CD8-positive, alpha-beta T cell (primary cell): ENCODE measurements at regions of chr3 and their contacts with region 1.

Region 1: DNA sequence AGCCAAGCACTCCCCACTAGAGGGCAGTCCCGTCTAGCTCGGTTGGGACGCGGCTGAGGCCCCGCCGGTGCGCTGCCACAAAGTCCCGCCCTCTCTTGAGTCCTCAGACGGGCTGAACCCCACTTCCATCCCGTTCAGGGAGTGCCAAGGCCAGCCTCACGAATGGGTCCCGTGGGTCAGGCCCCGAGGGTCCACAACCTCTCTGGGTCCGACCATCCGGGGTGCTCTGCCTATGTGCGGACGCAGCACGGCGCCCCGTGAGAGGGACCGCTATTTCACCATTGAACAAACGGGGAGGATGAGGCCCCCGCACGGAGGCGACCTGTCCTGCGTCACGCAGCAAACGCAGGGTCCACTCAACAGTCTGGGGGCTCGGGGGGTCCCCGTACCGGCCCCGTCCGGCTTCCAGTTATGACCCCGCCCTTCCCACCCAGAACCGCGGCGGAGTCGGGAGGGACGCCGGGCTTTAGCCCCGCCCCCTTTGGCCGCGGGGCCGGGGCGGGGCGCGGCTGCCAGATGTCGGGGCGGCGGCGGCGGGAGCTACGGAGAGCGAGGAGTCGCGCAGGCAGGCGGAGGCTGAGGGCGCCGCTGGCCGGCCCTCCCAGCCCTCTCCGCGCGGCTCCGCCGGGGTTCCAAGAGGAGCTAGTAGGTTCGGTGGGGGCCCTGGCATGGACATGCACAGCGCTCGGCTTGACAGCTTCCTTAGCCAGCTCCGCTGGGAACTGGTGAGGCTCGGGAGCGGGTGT is at the start of gene INKA1:
- DNase-seq: peak; percentile 77 to 94 (median 90)
- ATAC-seq: peak; percentile 83
- H3K4me3 ChIP-seq: peak within 1 kb of the TSS; percentile 98 to 99
- H3K4me3 Mint-ChIP-seq: peak within 1 kb of the TSS; percentile 94
- H3K27ac ChIP-seq: peak within 1 kb of the TSS; percentile 86 to 88
- H3K27ac Mint-ChIP-seq: peak within 1 kb of the TSS; percentile 92
- H3K4me1 ChIP-seq: peaks cover 43% of the 10 kb centered on the region
- H3K4me1 Mint-ChIP-seq: peaks cover 45% of the 10 kb centered on the region
- H3K27me3 ChIP-seq: no peaks in the 10 kb centered on the region
- H3K27me3 Mint-ChIP-seq: no peaks in the 10 kb centered on the region
- CTCF ChIP-seq: peak; percentile 75
- total RNA-seq, gene INKA1: 0.71 to 1.00 TPM

Region 2: DNA sequence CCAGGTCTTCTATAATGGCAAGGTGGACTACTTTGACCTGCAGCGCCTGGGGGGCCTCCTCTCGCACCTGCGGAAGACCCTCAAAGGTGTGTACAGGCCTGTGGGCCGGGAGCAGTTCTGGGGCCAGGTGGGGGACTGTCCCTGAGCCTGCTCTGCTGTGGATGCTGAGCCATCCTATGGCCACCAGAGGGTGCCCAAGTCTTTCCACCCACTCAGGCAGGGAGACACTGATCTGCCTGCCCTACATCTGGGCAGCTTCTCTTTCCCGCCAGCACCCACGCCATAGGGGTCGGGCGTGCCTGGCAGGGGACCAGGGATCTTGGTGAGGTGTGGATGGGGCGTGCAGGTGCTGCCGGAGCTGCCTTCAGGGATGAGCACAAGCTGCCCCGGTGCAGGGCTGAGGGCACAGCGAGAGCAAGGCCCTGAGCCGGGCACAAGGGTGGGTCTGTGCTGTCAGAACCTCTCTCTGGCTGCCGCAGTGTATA is 99.4 kb before region 1 on chr3:
- CTCF ChIA-PET with region 1: interaction called, 3 read pairs
- POLR2A ChIA-PET with region 1: interaction called, 4 read pairs
- intact Hi-C with region 1: loop called in 1 of 2 experiments (anchors 1 kb)
- DNase-seq: peak; percentile 39 to 81 (median 67)
- ATAC-seq: peak; percentile 100
- H3K4me3 ChIP-seq: no peak overlapping the region
- H3K4me3 Mint-ChIP-seq: no peak overlapping the region
- H3K27ac ChIP-seq: no peak overlapping the region
- H3K27ac Mint-ChIP-seq: no peak overlapping the region
- H3K4me1 ChIP-seq: no peaks in the 10 kb centered on the region
- H3K4me1 Mint-ChIP-seq: no peaks in the 10 kb centered on the region
- H3K27me3 ChIP-seq: no peaks in the 10 kb centered on the region
- H3K27me3 Mint-ChIP-seq: no peaks in the 10 kb centered on the region
- CTCF ChIP-seq: peak; percentile 74

Region 3: DNA sequence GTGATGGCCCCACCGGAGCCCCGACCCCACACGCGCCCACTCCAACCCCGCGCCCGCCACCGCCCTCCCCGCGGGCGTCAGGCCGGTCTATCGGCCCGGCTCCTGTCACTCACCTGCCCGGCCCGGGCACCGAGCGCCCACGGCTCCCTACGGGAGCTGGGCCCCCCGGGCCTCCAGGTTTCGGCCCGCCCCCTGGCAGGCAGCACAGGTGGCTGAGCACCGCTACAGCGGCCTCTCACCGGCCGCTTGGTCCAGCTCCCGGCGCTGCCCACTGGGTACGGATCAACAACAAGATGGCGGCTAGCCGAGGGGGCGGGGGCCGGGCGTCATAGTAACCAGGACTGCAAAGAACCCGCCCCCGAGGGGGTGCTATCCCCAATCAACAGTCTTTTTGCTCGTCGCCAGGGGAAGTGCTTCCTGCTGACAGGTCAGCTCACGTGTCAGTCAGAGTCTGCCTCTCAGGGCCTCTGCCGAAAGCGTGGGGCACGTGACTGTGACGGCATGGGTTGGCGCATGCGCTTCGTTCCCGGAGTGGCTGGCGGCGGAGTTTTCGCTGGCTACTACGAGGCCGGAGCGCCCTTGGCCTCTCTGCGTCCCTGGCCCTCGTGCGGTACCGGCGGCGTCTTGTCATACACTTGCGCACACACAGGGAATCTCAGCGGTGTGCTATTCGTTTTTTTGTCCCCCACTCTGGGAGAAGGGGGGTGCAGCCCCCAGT is 16.5 kb before region 1 on chr3 and contains the start of gene IP6K1:
- CTCF ChIA-PET with region 1: interaction called, 21 read pairs
- POLR2A ChIA-PET with region 1: interaction called, 28 read pairs
- intact Hi-C with region 1: loop called (anchors 1 to 2 kb)
- DNase-seq: peak; percentile 98 to 100 (median 99)
- ATAC-seq: peak; percentile 98
- H3K4me3 ChIP-seq: peak within 1 kb of the TSS; percentile 86 to 87
- H3K4me3 Mint-ChIP-seq: peak within 1 kb of the TSS; percentile 95
- H3K27ac ChIP-seq: peak within 1 kb of the TSS; percentile 87 to 94
- H3K27ac Mint-ChIP-seq: peak within 1 kb of the TSS; percentile 99
- H3K4me1 ChIP-seq: peaks cover 29% of the 10 kb centered on the region
- H3K4me1 Mint-ChIP-seq: peaks cover 40% of the 10 kb centered on the region
- H3K27me3 ChIP-seq: no peaks in the 10 kb centered on the region
- H3K27me3 Mint-ChIP-seq: no peaks in the 10 kb centered on the region
- CTCF ChIP-seq: no peak
- total RNA-seq, gene IP6K1: 34.3 to 36.6 TPM

Region 4: DNA sequence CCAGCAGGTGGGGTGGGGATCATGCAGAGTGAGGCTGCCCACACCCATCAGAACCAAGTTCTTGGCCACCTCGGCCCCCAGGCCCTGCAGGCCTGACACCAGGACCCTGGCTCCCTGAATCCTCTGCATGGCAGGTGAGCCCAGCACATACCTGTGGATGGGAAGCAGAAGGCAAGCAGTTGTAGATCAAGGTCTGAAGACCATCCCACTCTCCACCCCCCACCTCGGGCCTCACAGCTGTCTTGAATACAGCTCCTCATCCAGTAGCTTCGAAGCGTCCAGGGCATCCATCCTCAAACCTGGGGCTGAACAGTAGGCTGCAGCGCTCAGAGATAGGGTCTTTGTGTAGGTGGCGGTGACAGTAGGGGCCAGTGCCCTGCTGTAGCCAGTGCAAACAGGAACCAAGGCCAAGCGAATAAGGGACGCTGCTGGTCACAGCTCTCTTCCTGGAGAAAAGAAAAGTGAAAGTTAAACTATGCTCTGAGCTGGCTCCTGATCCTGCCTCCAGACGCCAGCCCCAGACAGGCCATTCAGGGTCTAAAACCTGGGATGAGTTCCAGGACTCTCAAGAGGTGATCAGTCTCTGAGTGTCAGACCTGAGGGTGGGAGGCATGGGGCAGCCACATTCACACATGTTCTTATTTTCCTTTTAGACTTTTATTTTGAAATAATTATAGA is 10.7 kb after region 1 on chr3 and contains the start of gene UBA7:
- CTCF ChIA-PET with region 1: interaction called, 20 read pairs
- POLR2A ChIA-PET with region 1: interaction called, 35 read pairs
- intact Hi-C with region 1: loop called in 1 of 2 experiments (anchors 1 kb)
- DNase-seq: peak in 6 of 9 experiments; percentile 12 to 73 (median 48)
- ATAC-seq: peak; percentile 91
- H3K4me3 ChIP-seq: peak within 1 kb of the TSS; percentile 71 to 78
- H3K4me3 Mint-ChIP-seq: peak within 1 kb of the TSS; percentile 97
- H3K27ac ChIP-seq: peak within 1 kb of the TSS; percentile 62 to 88
- H3K27ac Mint-ChIP-seq: peak within 1 kb of the TSS; percentile 98
- H3K4me1 ChIP-seq: peaks cover 29% of the 10 kb centered on the region
- H3K4me1 Mint-ChIP-seq: peaks cover 46% of the 10 kb centered on the region
- H3K27me3 ChIP-seq: no peaks in the 10 kb centered on the region
- H3K27me3 Mint-ChIP-seq: no peaks in the 10 kb centered on the region
- CTCF ChIP-seq: no peak
- total RNA-seq, gene UBA7: 196 to 206 TPM

Region 5: GRCh38 chr3:49906004-49906743 is 103.3 kb after region 1 on chr3:
- CTCF ChIA-PET with region 1: interaction called, 7 read pairs
- POLR2A ChIA-PET with region 1: interaction called, 3 read pairs
- intact Hi-C with region 1: loop called (anchors 1 kb)
- DNase-seq: peak; percentile 10 to 69 (median 48)
- ATAC-seq: peak; percentile 43
- H3K4me3 ChIP-seq: no peak overlapping the region
- H3K4me3 Mint-ChIP-seq: peak overlapping the region; percentile 37
- H3K27ac ChIP-seq: no peak overlapping the region
- H3K27ac Mint-ChIP-seq: peak overlapping the region; percentile 37
- H3K4me1 ChIP-seq: peaks cover 22% of the 10 kb centered on the region
- H3K4me1 Mint-ChIP-seq: peaks cover 29% of the 10 kb centered on the region
- H3K27me3 ChIP-seq: no peaks in the 10 kb centered on the region
- H3K27me3 Mint-ChIP-seq: no peaks in the 10 kb centered on the region
- CTCF ChIP-seq: peak; percentile 54

Region 6: GRCh38 chr3:49939858-49940666 is 137.2 kb after region 1 on chr3 and contains the start of gene RBM6:
- CTCF ChIA-PET with region 1: interaction called, 3 read pairs
- POLR2A ChIA-PET with region 1: interaction called, 4 read pairs
- intact Hi-C with region 1: loop called in 1 of 2 experiments (anchors 1 kb)
- DNase-seq: peak; percentile 82 to 97 (median 93)
- ATAC-seq: peak; percentile 98
- H3K4me3 ChIP-seq: peak within 1 kb of the TSS; percentile 78 to 98
- H3K4me3 Mint-ChIP-seq: peak within 1 kb of the TSS; percentile 99
- H3K27ac ChIP-seq: peak within 1 kb of the TSS; percentile 67 to 99
- H3K27ac Mint-ChIP-seq: peak within 1 kb of the TSS; percentile 98
- H3K4me1 ChIP-seq: peaks cover 15% of the 10 kb centered on the region
- H3K4me1 Mint-ChIP-seq: peaks cover 30% of the 10 kb centered on the region
- H3K27me3 ChIP-seq: no peaks in the 10 kb centered on the region
- H3K27me3 Mint-ChIP-seq: no peaks in the 10 kb centered on the region
- CTCF ChIP-seq: no peak
- total RNA-seq, gene RBM6: 92.1 to 95.0 TPM

Region 7: DNA sequence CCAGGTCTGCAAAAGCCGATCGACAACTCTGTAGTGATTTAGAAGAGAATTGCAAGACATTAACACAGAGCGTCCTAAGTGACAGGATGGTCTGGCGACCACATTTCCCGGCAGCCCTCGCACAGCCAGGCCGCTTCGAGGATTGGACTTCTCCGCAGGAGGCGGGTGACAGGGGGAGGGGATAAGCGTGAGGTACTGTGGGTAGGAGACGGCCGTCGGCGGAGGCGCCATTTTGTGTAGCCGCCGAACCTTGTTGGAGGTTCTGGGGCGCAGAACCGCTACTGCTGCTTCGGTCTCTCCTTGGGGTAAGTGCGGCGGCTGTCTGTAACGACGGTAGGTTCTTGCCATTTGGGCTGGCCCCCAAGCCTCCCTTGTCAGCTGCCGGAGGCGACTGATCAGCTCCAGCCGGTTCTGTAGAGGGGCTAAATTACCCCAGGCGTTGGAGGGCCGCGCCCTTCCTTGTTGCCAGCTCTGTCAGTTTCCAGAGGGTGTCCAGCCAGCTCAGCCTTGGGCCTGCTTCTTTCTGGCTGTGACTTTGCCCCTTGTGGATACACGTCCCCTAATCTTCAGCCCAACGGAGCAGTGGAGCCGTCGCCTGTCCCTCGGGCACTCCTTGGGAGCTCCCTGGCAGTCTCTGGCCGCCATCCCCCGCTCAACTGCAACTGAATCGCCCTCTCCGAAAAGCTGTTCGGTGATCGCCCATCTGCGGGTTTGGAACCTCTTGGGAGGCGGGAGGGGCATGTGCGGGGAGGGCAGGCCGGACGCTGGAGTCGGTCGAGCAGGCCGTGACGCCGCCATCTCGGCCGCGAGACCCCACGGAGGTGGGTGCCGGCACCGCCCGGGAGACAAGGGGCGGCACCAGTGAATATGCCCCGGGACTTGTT is 286.1 kb after region 1 on chr3 and contains the start of gene RBM5:
- CTCF ChIA-PET with region 1: no interaction called
- POLR2A ChIA-PET with region 1: no interaction called
- intact Hi-C with region 1: loop called in 1 of 2 experiments (anchors 2 kb)
- DNase-seq: peak; percentile 80 to 94 (median 92)
- ATAC-seq: peak; percentile 99
- H3K4me3 ChIP-seq: peak within 1 kb of the TSS; percentile 100
- H3K4me3 Mint-ChIP-seq: peak within 1 kb of the TSS; percentile 96
- H3K27ac ChIP-seq: peak within 1 kb of the TSS; percentile 97 to 99
- H3K27ac Mint-ChIP-seq: peak within 1 kb of the TSS; percentile 98
- H3K4me1 ChIP-seq: peaks cover 27% of the 10 kb centered on the region
- H3K4me1 Mint-ChIP-seq: peaks cover 34% of the 10 kb centered on the region
- H3K27me3 ChIP-seq: no peaks in the 10 kb centered on the region
- H3K27me3 Mint-ChIP-seq: no peaks in the 10 kb centered on the region
- CTCF ChIP-seq: no peak
- total RNA-seq, gene RBM5: 376 to 409 TPM